GM12878 (cell line): ENCODE measurements at regions of chr15 and their contacts with region 1.

Region 1: GRCh38 chr15:89057504-89058133 is 30.6 kb upstream of the ABHD2 start:
- DNase-seq: peak; percentile 15
- ATAC-seq: peak; percentile 99
- H3K4me3 ChIP-seq: no peak overlapping the region
- H3K27ac ChIP-seq: no peak overlapping the region
- H3K4me1 ChIP-seq: no peaks in the 10 kb centered on the region
- H3K27me3 ChIP-seq: no peaks in the 10 kb centered on the region; a peak in 1 of 4 replicates
- CTCF ChIP-seq: peak; percentile 97 to 99 (median 99)
- EP300 ChIP-seq: no peak
- POLR2A ChIP-seq: no peak
- RAD21 ChIP-seq: peak; percentile 98

Region 2: DNA sequence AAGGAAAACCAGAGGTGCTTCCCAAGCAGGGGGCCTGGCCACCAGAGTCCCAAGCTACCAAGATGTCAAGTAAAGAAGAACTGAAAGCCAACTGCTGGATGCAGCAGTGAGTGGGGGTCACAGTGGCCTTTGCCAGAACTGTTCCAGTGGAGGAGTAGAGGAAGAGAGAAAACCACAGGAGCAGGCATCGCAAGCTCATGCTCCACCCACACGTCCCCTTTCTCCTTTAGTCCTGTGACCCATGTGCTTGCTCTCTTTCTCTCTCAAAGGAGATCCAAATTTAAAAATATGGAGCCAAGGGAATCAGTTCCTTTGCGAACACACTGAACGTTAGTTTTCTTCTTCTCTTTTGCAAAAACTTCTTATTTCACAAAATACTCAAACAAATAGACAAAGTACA is 18.2 kb after region 1 on chr15:
- CTCF ChIA-PET with region 1: interaction called, 16 read pairs
- POLR2A ChIA-PET with region 1: no interaction called
- RAD21 ChIA-PET with region 1: interaction called, 5 read pairs
- SMC1A ChIA-PET with region 1: interaction called, 8 read pairs
- in situ Hi-C with region 1: no loop called
- intact Hi-C with region 1: no loop called
- DNase-seq: no peak
- ATAC-seq: no peak
- H3K4me3 ChIP-seq: no peak overlapping the region
- H3K27ac ChIP-seq: no peak overlapping the region
- H3K4me1 ChIP-seq: no peaks in the 10 kb centered on the region
- H3K27me3 ChIP-seq: no peaks in the 10 kb centered on the region
- CTCF ChIP-seq: no peak
- EP300 ChIP-seq: no peak
- POLR2A ChIP-seq: no peak
- RAD21 ChIP-seq: no peak

Region 3: GRCh38 chr15:89112341-89112971 is 54.8 kb after region 1 on chr15:
- CTCF ChIA-PET with region 1: interaction called, 20 read pairs
- POLR2A ChIA-PET with region 1: interaction called, 8 read pairs
- RAD21 ChIA-PET with region 1: interaction called, 9 read pairs
- SMC1A ChIA-PET with region 1: interaction called, 10 read pairs
- in situ Hi-C with region 1: no loop called
- intact Hi-C with region 1: loop called (anchors 5 kb)
- DNase-seq: peak; percentile 38
- ATAC-seq: peak; percentile 99
- H3K4me3 ChIP-seq: no peak overlapping the region
- H3K27ac ChIP-seq: peak overlapping the region; percentile 23
- H3K4me1 ChIP-seq: peaks cover 8% of the 10 kb centered on the region; the same call in 1 of the 2 replicates
- H3K27me3 ChIP-seq: no peaks in the 10 kb centered on the region
- CTCF ChIP-seq: no peak
- EP300 ChIP-seq: peak; percentile 66 to 74; a peak in 3 of 4 replicates
- POLR2A ChIP-seq: no peak
- RAD21 ChIP-seq: no peak

Region 4: DNA sequence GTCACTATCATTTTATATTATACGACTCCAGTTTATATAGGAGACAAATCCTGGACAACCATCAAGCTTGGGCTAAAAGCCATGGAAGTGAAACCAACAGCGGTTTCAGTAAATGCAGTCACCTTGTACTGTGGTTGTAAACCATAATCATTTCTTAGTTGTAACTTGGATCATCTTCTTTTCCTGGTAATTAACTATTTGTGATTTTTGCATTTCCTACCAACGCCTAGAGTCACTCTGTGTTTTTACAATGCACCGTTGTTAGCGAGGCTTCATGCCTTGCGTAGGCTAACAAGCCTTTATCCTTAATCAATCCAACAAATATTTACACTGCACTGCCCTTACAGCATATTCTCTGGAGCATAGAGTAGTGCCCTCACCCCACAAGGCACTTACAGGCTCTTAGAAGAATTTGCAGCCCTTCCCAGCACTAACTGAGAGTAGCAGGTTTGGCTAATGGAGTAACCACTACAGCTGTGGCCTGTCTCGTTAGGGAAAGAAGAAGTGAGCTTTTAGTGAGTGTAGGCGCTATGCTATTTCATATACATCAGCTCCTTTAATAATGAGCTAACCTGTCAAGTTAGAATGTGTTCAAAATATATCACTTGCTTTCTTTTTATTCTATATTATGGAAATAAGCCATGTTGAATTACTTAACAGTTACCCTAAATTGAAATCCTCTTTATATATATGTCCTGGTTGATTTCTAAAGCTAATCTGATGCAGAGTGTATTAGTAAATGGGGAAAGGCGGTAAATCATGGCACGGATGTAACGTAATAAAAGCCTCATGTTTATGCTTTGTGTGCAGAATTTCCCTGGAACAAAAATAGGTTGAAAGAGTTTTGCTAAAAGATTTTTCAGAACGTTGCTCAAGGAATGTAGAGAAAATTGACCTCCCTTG is 93.4 kb after region 1 on chr15:
- CTCF ChIA-PET with region 1: interaction called, 26 read pairs
- POLR2A ChIA-PET with region 1: no interaction called
- RAD21 ChIA-PET with region 1: interaction called, 7 read pairs
- SMC1A ChIA-PET with region 1: interaction called, 6 read pairs
- in situ Hi-C with region 1: no loop called
- intact Hi-C with region 1: no loop called
- DNase-seq: no peak
- ATAC-seq: no peak
- H3K4me3 ChIP-seq: no peak overlapping the region
- H3K27ac ChIP-seq: no peak overlapping the region
- H3K4me1 ChIP-seq: no peaks in the 10 kb centered on the region
- H3K27me3 ChIP-seq: no peaks in the 10 kb centered on the region
- CTCF ChIP-seq: no peak
- EP300 ChIP-seq: no peak
- POLR2A ChIP-seq: no peak
- RAD21 ChIP-seq: no peak

Region 5: DNA sequence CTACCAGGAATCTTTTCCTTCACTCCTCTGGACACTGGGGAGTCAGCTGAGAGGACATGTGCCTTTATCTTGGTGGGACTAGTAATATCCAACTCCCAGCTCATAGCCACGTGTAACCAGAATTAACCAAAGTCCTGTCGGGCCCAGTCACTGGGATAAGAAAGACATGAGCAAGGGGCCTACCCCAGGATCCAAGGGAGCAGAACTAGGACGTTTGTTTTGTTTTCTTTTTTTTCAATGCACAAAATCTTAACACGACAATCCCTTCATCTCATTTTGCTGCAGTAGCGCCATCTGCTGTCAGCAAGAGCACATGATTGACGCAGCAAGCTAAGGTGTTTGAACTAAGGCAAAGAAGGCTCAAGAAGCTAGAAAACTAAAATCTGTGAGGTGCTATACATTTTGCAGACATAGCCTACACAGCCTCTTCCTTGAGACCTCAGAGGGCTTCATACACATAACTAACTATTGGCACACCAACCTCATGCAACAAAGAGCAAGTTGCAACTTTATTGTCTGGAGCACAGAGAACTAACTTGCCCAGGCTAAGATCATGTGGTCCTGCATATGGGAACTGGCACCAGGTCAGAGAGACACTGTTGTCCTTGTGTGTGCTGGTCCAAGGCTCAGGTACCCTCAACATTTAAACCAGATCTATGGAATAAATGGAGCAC is 120.2 kb after region 1 on chr15:
- CTCF ChIA-PET with region 1: interaction called, 339 read pairs
- POLR2A ChIA-PET with region 1: interaction called, 3 read pairs
- RAD21 ChIA-PET with region 1: interaction called, 62 read pairs
- SMC1A ChIA-PET with region 1: interaction called, 61 read pairs
- in situ Hi-C with region 1: loop called (anchors 5 kb)
- intact Hi-C with region 1: loop called (anchors 1 kb)
- DNase-seq: peak; percentile 15
- ATAC-seq: peak; percentile 76
- H3K4me3 ChIP-seq: no peak overlapping the region
- H3K27ac ChIP-seq: no peak overlapping the region
- H3K4me1 ChIP-seq: peaks cover 7% of the 10 kb centered on the region; the same call in 1 of the 2 replicates
- H3K27me3 ChIP-seq: no peaks in the 10 kb centered on the region
- CTCF ChIP-seq: peak; percentile 76 to 92 (median 87); a peak in 5 of 6 replicates
- EP300 ChIP-seq: no peak
- POLR2A ChIP-seq: no peak
- RAD21 ChIP-seq: peak; percentile 88

Region 6: DNA sequence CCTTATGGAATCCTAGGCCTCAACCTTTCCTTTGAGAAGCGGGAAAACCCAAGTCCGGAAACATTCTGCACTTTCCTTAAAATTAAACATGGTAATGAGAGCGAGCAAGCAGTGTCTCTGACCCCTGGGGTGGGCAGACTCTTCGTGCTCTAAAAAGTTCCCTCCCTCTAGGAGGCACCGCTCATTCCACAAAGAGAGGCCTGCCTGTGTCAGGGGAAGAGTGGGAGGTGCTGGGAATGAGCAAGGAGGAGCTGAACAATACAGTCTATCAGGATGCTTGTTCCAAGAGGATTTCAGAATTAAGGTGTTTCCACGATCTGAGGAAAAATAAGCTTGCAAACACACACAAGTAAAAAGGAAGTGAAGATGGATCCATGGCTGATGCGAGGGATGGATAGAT is 169.8 kb after region 1 on chr15:
- CTCF ChIA-PET with region 1: no interaction called
- POLR2A ChIA-PET with region 1: no interaction called
- RAD21 ChIA-PET with region 1: no interaction called
- SMC1A ChIA-PET with region 1: no interaction called
- in situ Hi-C with region 1: no loop called
- intact Hi-C with region 1: no loop called
- DNase-seq: no peak
- ATAC-seq: no peak
- H3K4me3 ChIP-seq: no peak overlapping the region
- H3K27ac ChIP-seq: no peak overlapping the region
- H3K4me1 ChIP-seq: no peaks in the 10 kb centered on the region
- H3K27me3 ChIP-seq: no peaks in the 10 kb centered on the region
- CTCF ChIP-seq: no peak
- EP300 ChIP-seq: no peak
- POLR2A ChIP-seq: no peak
- RAD21 ChIP-seq: no peak